Left colon (tissue), 2 donors: ENCODE measurements at regions of chr14 and their contacts with region 1.

Region 1: DNA sequence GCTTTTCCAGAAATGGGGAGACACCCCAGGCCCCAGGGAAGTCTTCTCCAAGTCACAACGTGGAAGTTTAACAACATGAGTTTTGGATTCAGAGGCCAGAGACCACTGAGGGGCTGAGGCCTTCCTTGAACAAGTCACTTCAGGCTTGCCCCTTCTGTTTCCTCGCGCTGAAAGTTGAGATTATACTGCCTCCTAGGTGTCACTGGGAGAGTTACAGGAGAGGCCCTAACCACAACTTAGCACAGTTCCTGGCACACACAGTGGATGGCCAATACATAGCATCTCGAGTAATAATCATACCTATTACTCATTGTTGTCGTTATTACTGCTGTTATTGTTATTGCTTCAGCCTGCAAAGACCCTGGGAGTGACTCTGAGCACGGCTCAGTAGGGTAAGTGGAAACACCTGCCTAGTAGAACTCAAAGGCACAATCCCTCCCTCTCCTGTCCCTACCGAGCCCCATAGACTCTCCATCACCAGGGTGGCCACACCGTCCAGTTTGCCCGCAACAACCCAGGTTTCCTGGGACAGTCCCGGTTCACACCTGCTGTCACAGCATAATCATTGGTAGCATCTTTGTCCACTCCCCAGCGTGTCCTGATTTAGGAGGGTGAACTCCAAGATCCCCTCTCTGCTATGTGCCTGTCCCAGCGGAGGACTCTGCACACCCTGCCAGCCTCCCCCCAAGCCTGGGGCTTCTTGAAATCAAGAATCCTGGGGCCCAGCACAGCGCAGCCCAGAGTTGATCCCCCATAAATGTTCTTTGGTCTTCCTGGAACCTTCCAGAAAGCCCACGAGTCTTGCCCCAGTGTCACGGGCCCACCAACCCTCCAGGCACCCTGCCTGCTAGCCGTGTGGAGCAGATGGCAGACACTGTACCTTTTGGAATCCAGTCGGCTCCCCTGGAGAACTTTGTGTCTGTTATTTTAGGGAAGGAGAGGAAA is 85.0 kb downstream of the SYNE3 start:
- DNase-seq: no peak
- ATAC-seq: peak; percentile 74

Region 2: DNA sequence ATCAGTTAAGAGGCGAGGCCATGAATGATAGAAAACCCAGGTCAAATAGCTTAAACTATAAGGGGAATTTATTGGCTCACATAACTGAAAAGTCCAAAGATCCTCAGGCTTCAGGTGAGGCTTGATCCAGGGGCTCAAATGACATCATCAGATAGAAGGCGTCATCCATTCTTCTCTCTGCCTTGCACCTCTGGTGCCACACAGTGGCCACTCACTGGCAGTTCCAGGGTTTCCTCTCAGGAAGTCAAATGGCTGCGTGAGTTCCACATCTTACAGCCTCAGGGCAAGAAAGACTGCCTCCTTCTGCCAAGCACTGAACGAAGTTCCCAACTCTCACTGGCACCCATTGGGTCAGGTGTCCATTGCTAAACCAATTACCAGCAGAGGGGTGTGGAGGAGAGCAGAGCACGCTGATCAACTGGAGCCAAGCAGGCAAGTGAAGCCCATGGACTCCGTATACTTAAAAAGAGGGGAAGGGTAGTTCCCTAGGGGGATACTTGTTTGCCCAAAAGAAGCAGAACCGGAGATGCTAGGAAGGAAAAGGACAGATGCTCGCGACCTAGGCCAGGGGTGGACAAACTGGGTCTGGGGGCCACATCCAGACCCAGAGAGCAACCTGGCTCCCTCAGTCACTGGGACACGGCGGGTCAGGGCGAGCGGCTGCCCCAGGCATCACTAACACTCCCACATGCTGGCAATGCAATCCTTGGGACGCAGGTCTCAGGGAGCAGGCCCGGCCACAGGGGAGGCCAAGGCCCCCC is 750.0 kb before region 1 on chr14:
- intact Hi-C with region 1: loop called in 1 of 2 experiments (anchors 5 kb)
- DNase-seq: peak in 1 of 2 donors; percentile 17
- ATAC-seq: peak; percentile 82